Heart right ventricle (tissue), 16 donors: ENCODE measurements at regions of chr4 and their contacts with region 1.

Region 1: GRCh38 chr4:702618-703048 is 3.0 kb upstream of the PCGF3 start:
- DNase-seq: no peak
- ATAC-seq: no peak
- H3K4me3 ChIP-seq: no peak overlapping the region
- H3K27ac ChIP-seq: no peak overlapping the region
- H3K4me1 ChIP-seq: peaks cover 4 to 25% (median 7%) of the 10 kb centered on the region in 9 donors
- H3K27me3 ChIP-seq: no peaks in the 10 kb centered on the region
- CTCF ChIP-seq: no peak

Region 2: GRCh38 chr4:271492-272103 is 431.0 kb before region 1 on chr4:
- intact Hi-C with region 1: no loop called
- DNase-seq: no peak
- ATAC-seq: no peak
- H3K4me3 ChIP-seq: no peak overlapping the region
- H3K27ac ChIP-seq: no peak overlapping the region
- H3K4me1 ChIP-seq: no peaks in the 10 kb centered on the region
- H3K27me3 ChIP-seq: no peaks in the 10 kb centered on the region
- CTCF ChIP-seq: no peak

Region 3: DNA sequence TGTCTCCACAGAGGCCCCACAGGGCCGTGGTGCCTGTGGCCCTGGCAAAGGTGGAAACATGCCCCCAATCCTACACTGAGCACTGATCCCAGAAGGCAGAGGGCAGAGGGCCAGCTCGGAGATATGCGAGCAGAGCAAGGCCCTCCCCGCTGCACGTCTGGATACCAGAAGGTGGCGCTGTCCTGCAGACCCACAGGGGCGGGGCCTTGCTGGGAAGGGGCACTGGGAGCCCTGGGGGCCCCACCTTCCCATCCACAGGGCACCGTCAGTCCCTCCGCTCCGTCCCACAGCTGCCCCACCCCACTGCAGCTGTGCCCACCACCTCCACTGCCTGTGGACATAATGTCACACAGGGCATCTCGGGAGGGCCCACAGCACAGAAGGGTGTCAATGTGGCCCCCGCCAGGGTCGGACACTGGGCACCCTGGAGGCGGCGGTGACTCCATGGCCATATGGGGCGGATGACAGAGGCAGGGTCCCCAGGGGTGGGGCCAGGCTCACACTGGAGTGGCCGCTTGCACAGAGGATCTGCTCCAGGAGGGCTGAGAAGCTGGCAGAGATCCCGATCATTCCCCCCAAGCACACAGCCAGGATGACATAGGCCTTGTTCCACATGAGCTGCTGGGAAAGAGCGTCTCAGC is 18.5 kb before region 1 on chr4:
- intact Hi-C with region 1: loop called in 1 of 10 experiments (anchors 2 kb)
- DNase-seq: peak; percentile 74
- ATAC-seq: peak in 7 of 8 donors; percentile 12 to 46 (median 41)
- H3K4me3 ChIP-seq: no peak overlapping the region
- H3K27ac ChIP-seq: peak overlapping the region in 3 of 10 donors; percentile 22 to 62 (median 39)
- H3K4me1 ChIP-seq: peaks cover 30 to 53% (median 46%) of the 10 kb centered on the region in 9 donors
- H3K27me3 ChIP-seq: no peaks in the 10 kb centered on the region
- CTCF ChIP-seq: peak; percentile 45 to 85 (median 73)

Region 4: DNA sequence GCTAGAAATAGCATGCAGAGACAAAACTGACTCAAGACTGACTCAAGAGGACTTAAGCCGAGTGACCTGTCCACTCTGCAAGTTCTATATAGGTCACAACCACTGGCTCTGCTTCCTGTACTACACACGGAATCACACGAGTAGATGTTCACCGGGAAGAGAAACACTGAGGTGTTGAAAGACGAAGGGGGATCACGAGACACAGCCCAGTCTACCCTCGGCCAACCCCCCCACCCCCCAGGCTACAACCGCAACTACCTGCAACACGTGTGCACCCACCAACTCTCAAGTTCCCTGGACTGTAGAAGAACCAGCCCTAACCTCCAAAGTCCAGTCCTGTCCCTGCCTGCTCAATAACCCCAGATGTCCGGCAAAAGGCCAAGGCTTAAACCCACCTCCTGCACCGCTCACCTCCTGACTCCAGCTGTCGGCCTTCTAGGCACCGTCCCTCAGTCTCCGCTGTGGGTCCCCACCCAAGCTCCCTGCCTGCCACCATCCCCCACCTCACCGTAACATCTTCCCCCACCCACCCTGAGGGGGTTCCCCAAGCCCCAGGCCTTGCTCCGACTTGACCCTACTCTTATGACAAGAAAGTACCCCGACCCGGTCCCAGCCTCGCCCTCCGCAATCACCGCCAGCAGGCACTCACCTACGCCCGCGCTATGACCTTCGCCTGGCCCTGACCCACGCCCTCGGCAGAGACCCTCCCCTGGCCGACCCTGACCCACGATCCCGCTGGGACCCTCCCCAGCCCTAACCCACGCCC is 228.7 kb after region 1 on chr4:
- intact Hi-C with region 1: no loop called
- DNase-seq: no peak
- ATAC-seq: peak in 6 of 8 donors; percentile 1 to 25 (median 6)
- H3K4me3 ChIP-seq: peak overlapping the region; percentile 87 to 100 (median 98)
- H3K27ac ChIP-seq: peak overlapping the region; percentile 75 to 98 (median 91)
- H3K4me1 ChIP-seq: peaks cover 8 to 68% (median 49%) of the 10 kb centered on the region in 9 donors
- H3K27me3 ChIP-seq: no peaks in the 10 kb centered on the region
- CTCF ChIP-seq: no peak